Right ventricle myocardium inferior (tissue), 1 donor: ENCODE measurements at regions of chr5 and their contacts with region 1.

Region 1: DNA sequence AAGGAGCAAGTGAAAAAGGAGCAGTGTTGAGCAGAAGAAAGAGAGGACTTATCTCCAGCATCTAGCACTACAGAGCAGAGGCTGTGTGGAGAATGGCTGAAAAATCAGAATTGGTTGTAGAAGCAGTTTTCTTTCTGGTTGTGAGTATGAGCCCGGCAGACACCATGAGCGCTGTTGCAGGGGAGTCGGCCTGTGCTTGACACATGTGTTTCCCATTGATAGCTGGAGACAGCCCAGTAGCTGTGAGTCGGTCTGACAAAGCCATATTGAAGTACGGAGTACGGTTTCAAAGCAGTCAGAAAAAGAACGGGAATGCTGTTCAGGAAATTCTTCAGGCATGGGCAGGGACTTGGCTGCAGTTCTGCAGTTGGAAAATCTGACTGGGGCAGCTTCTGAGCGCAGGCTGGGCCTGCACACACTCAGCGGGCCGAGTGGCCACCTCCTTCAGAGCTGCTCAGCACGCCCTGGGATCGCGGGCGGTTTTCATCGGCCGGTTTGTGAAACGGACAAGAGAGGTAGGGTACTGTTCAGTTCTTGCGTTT is at the start of gene SGCD:
- DNase-seq: peak; percentile 83
- ATAC-seq: peak; percentile 87
- total RNA-seq, gene SGCD: 75.2 TPM

Region 2: DNA sequence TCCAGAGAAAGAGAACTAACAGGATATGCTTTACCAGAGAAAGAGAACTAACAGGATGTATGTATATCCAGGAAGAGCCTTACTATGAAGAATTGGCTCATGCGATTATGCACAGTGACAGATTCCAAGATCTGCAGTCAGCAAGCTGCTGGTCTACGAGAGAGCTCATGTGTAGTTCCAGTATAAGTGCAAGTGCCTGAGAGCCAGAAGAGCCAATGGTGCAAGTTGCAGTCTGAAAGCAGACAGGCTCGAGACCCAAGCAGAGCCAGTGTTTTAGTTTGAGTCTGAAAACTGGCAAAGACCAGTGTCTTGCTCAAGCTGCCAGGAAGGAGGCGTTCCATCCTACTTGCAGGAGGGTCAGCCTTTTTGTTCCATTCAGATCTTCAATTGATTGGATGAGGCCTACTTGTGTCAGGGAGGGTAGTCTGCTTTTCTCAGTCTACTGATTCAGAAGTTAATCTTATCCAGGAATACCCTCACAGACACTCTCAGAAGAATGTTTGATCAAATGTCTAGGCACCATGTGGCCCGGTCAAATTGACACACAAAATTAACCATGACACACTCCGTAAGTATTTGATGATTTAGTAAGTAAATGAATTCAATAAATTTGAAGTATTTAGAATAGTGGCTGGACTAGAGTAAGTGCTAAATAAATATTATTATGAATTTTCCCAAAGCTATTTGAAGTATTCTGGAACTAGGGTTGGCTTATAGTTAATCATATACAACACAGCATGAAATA is 371.9 kb before region 1 on chr5:
- intact Hi-C with region 1: loop called (anchors 2 kb)
- DNase-seq: no peak
- ATAC-seq: no peak

Region 3: DNA sequence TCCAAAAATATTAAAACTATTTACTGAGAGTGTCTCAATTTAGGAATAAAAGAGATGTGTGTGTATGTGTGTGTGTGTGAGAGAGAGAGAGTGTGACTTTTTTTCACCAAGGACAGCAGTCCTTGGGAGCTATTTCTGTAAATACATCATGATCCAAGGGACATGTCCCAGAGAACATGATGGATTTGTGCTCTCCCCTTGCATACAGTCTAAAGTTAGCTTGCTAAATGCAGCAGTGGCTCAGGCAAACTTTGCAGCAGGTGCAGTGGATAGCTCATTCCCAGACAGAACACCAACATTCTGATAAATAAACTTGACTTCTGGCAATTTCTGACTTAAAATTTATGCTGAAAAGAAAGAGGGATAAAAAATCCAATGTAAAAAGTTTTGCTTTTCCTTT is 55.2 kb before region 1 on chr5:
- intact Hi-C with region 1: loop called (anchors 5 kb)
- DNase-seq: no peak
- ATAC-seq: peak; percentile 91

Region 4: DNA sequence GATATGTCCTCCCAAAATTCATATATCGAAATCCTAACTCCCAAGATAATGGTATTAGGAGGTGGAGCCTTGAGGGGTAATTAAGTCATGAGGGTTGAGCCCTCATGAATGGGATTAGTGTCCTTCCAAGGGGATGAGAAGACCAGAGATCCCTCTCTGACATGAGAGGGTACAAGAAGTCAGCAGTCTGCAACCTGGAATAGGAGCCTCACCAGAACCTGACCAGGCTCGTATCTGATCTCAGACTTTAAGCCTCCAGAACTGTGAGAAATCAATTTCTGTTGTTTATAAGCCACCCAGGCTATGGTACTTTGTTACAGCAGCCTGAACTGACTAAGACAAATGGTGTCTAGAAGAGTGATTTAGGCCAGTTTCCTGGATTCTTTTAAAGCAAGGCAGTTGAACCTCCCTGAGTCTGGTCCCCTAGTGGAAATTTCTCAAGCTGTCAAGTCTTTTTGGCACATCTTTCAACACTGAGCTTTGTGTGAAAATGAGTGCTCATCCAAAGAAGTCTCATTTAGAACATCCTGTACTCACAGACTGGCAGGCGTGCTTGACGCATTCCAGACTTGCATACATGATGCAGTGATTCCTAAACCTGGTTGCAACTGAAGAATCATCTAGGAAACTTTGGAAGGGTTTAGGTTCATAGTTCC is 268.5 kb after region 1 on chr5:
- intact Hi-C with region 1: loop called (anchors 2 kb)
- DNase-seq: peak; percentile 81
- ATAC-seq: peak; percentile 94

Region 5: DNA sequence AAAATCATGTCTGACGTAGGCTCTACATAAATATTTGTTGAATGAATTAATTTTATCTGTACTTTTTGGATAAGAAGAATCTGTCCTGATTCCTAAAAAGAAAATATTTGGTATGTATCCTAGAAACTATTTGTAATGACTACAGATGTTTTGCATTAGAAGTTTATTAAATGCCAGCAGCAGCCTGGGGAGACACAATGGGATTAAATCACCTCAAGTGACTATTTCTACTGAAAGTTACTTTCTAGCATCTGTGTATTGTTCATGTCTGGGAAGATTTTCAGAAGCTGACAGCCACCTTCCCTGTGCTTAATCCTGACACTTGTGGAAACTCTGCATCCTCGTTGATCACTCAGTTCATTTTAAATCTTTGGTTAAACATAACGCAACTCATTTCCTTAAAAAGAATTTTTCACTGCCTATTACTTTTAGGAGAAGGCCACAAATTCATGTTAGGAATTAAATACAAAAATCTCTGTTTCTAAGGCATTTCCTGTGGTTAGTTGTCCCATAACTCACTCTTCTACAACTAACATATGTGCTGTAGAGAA is 314.0 kb after region 1 on chr5:
- intact Hi-C with region 1: no loop called
- DNase-seq: no peak
- ATAC-seq: peak; percentile 38